ENCODE measurements at regions of chr17 and their contacts with region 1.

Region 1: DNA sequence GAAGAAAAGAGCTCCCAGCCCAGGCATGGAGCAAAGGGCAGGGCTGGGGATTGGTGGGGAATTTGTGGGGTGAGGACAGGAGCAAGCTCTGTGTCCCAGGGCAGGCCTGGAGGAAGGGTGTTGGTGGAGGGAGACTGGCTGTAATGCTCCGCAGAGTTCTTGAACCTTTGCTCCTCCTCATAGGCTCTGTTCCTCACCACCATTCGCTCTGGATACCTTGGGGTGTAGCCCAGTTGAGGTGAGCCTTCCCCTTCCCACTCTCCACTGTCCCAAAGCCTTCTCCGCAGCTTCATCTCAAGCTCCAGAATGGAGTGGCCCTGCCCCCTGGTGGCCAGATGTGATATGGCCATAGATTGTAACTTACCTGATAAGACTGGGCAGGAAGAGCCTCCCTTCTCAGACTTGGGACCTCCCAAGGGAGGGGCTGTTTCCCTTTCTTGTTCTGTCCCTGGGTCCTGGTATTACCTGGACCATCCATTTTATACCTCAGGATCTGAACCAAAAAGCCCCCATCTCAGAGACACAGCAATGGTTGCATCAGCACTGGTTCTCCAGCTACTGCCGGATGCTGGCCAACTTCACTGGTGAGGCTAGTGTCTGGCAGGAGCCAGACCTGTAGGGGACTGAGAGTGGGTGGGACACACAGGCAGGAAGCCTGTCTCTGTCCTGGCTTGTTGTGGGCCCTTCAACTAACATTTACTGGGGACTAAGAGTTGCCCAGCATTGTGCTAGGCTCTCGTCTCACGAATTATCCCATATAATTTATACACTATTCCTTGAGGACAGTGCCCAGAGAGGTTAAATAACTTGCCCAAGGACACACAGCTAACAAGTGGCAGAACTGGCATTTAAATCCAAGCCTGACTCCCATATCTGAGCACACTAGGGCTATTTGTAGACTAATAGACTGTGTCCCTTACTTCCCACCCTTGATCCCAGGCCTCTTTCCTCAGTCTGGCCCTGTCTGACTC is 19.1 kb upstream of the STAC2 start:
- DNase-seq: peak; percentile 87 to 91
- ATAC-seq: peak; percentile 88 to 95
- H3K4me3 ChIP-seq: no peak overlapping the region
- H3K27ac ChIP-seq: no peak overlapping the region
- H3K4me1 ChIP-seq: peaks cover 9% of the 10 kb centered on the region; the same call in 1 of the 3 replicates
- CTCF ChIP-seq: peak; percentile 97
- EP300 ChIP-seq: no peak
- POLR2A ChIP-seq: no peak
- RAD21 ChIP-seq: peak; percentile 92 to 99

Region 2: DNA sequence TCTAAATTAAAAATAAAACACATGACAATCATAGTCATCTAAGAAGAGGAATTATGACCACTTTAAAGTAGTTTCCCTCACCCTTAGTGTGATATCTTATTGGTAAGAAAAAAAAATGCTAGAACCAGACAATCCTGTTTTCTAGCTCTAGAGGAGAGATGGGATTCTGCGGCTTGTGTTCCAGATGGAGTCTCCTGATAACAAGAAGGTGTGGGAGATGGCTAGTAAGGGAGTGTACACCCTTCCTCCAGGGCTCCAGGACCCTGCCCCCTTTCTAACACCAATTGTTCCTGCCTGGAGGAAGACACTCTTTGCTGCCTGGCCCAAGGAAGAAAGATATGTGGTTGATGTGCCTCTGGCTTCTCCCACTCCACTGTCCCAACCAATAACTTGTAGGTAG is 208.9 kb before region 1 on chr17:
- CTCF ChIA-PET with region 1: no interaction called
- POLR2A ChIA-PET with region 1: no interaction called
- DNase-seq: no peak
- ATAC-seq: 0 out of 6 replicates have a peak, but pooled peaks of 1 of the 2 experiments have one; percentile 54
- H3K4me3 ChIP-seq: no peak overlapping the region
- H3K27ac ChIP-seq: no peak overlapping the region
- H3K4me1 ChIP-seq: no peaks in the 10 kb centered on the region
- CTCF ChIP-seq: no peak
- EP300 ChIP-seq: no peak
- POLR2A ChIP-seq: no peak
- RAD21 ChIP-seq: no peak

Region 3: DNA sequence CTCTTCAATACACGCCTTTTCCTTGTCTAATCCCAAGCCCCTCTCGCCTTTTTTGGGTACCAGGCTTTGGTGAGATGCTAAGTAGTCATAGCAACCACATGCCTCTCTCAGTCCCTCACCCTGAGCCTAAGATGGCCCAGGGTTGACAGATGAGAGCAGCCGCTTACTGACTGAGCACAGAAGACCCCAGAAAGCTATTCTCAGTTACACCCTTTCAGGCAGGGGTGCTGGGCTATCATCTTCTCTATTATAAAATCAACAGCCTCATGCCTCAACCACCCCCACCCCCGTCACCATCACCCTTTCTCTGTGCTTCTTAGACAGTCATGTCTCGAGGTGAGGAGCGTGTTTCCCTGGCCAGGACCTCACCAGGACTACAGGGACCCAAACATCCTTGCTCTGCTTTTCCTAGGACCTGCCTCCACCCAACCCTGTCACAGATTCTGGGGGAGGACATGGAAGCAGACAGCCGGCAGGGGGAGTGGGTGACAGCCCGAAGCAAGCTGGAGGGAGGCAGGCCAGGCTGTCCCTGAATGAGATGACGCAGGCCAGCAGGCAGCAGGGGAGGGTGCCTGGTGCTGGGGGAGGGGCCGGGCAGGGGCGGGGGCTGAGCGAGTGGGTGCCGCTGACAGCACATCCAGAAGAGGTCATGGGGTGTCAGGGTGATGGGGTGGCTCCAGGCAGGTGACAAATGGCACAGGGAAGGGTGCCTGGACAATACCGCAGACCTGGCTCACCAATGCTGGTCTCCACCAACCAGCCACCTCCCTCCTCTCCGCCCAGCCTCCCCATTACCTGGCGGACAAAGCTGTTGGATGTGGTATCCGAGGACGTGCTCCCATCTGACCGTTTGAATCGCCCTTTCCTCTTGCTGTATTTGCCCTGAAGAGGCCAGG is 50.5 kb before region 1 on chr17:
- CTCF ChIA-PET with region 1: interaction called, 1,140 read pairs
- POLR2A ChIA-PET with region 1: interaction called, 10 read pairs
- DNase-seq: peak; percentile 73 to 84
- ATAC-seq: peak; percentile 44 to 63
- H3K4me3 ChIP-seq: no peak overlapping the region
- H3K27ac ChIP-seq: peak overlapping the region in 1 of 2 experiments; percentile 96; a peak in 1 of 6 replicates
- H3K4me1 ChIP-seq: peaks cover 35% of the 10 kb centered on the region
- CTCF ChIP-seq: peak; percentile 33; the same call in 2 of the 3 replicates
- EP300 ChIP-seq: no peak
- POLR2A ChIP-seq: no peak
- RAD21 ChIP-seq: peak in 1 of 2 experiments; percentile 36; a peak in 1 of 5 replicates

Region 4: DNA sequence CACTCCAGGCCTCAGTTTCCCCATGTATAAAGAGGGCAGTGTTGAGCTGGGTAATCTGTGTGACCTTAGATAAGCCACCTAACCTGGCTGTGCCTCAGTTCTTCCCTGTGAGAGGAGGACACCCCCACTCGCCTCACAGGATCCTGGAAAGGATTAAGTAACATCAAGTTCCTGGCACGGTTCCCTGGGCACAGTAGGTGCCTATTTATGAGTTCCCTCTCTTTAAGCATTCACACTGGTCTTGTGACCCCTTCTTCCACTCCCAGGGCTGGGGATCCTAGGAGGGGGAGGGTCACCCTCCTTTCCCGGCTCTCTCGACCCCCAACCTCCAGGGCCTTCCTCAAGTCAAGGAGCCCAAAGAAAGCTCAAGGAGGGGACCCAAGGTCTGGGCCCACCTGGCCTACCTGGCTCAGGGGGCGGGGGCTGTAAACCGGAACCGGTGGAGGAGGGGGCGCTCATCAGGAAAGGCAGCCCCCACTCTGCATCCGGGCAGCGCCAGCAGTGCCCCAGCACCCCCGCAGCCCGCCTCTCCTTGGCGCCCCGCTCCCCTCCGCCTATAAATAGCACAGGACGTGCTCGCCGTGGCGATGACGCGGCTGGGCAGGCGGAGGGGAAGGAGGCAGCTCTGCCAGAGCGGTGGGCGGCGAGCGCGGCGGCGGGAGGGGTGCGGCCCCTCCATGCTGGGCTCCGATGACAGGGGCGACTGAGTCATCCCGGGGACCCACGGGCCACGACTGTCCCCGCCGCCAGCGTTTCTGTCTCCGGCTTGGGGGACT is 35.4 kb before region 1 on chr17:
- CTCF ChIA-PET with region 1: interaction called, 1,140 read pairs
- POLR2A ChIA-PET with region 1: interaction called, 34 read pairs
- DNase-seq: no peak
- ATAC-seq: no peak
- H3K4me3 ChIP-seq: peak overlapping the region; percentile 25; the same call in 2 of the 3 replicates
- H3K27ac ChIP-seq: peak overlapping the region; percentile 64 to 73; a peak in 4 of 6 replicates
- H3K4me1 ChIP-seq: peaks cover 34% of the 10 kb centered on the region
- CTCF ChIP-seq: no peak
- EP300 ChIP-seq: no peak
- POLR2A ChIP-seq: no peak
- RAD21 ChIP-seq: no peak

Region 5: GRCh38 chr17:39276113-39276512 is 31.2 kb after region 1 on chr17:
- CTCF ChIA-PET with region 1: interaction called, 18 read pairs
- POLR2A ChIA-PET with region 1: no interaction called
- DNase-seq: no peak
- ATAC-seq: no peak
- H3K4me3 ChIP-seq: no peak overlapping the region
- H3K27ac ChIP-seq: no peak overlapping the region
- H3K4me1 ChIP-seq: peaks cover 5% of the 10 kb centered on the region; the same call in 2 of the 3 replicates
- CTCF ChIP-seq: no peak
- EP300 ChIP-seq: no peak
- POLR2A ChIP-seq: no peak
- RAD21 ChIP-seq: no peak

Region 6: DNA sequence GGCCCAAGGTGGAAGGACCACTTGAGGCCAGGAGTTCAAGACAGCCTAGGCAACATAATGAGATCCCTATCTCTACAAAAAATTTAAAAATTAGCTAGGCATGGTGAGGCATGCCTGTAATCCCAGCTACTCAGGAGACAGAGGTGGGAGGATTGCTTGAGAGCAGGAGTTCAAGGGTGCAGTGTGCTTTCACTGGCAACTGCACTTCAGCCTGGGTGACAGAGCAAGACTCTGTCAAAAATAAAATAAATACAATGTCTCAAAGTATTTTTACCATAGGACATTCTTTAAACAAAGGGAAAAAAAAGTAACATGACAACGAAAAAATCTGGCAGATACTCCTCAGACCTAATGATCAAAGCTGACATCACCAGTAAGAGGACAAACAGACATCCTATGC is 83.9 kb after region 1 on chr17:
- CTCF ChIA-PET with region 1: no interaction called
- POLR2A ChIA-PET with region 1: no interaction called
- DNase-seq: no peak
- ATAC-seq: no peak
- H3K4me3 ChIP-seq: no peak overlapping the region
- H3K27ac ChIP-seq: no peak overlapping the region
- H3K4me1 ChIP-seq: 0 out of 3 replicates have a peak, but pooled peaks cover 4% of the 10 kb centered on the region
- CTCF ChIP-seq: no peak
- EP300 ChIP-seq: no peak
- POLR2A ChIP-seq: no peak
- RAD21 ChIP-seq: no peak

Region 7: DNA sequence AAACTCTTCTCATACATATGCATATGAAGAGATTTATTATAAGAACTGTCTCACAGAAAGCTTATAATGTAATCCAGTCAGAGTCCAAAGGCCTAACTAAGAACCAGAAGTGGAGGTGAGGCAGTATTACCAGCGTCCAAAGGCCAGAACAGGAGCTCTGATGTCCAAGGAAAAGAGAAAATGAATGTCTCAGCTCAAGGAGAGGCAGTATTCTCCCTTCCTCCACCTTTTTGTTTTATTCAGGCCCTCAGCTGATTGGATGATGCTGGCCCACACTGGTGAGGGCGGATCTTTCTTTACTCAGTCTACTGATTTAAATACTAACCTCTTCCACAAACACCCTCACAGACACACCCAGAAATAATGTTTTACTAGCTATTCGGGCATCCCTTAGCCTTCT is 113.1 kb after region 1 on chr17:
- CTCF ChIA-PET with region 1: interaction called, 11 read pairs
- POLR2A ChIA-PET with region 1: no interaction called
- DNase-seq: peak in 1 of 2 experiments; percentile 23
- ATAC-seq: peak in 1 of 2 experiments; percentile 66; a peak in 3 of 6 replicates
- H3K4me3 ChIP-seq: no peak overlapping the region
- H3K27ac ChIP-seq: peak overlapping the region in 1 of 2 experiments; percentile 27; a peak in 1 of 6 replicates
- H3K4me1 ChIP-seq: peaks cover 22% of the 10 kb centered on the region
- CTCF ChIP-seq: no peak
- EP300 ChIP-seq: no peak
- POLR2A ChIP-seq: no peak
- RAD21 ChIP-seq: no peak

Region 8: DNA sequence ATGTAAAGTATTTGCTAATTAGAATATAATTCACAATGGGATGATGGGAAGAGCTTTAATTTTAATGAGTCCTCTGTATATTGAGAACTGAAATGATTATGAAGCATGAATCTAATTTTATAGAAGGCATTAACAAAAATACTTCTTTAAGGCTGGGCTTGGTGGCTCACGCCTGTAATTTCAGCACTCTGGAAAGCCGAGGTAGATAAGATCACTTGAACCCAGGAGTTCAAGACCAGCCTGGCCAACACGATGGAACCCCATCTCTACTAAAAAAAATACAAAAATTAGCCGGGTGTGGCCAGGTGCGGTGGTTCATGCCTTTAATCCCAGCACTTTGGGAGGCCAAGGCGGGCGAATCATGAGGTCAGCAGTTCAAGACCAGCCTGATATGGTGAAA is 228.4 kb after region 1 on chr17:
- CTCF ChIA-PET with region 1: no interaction called
- POLR2A ChIA-PET with region 1: no interaction called
- DNase-seq: no peak
- ATAC-seq: no peak
- H3K4me3 ChIP-seq: no peak overlapping the region
- H3K27ac ChIP-seq: no peak overlapping the region
- H3K4me1 ChIP-seq: no peaks in the 10 kb centered on the region
- CTCF ChIP-seq: no peak
- EP300 ChIP-seq: no peak
- POLR2A ChIP-seq: no peak
- RAD21 ChIP-seq: no peak

Measured in A549 (cell line).